ENCODE measurements at regions of chr17 and their contacts with region 1.

Region 1: GRCh38 chr17:76264755-76265596 is at the start of gene UBALD2:
- DNase-seq: peak; percentile 99
- H3K4me3 Mint-ChIP-seq: peak within 1 kb of the TSS; percentile 93
- H3K27ac Mint-ChIP-seq: peak within 1 kb of the TSS; percentile 99
- H3K4me1 Mint-ChIP-seq: peaks cover 60% of the 10 kb centered on the region
- H3K27me3 Mint-ChIP-seq: no peaks in the 10 kb centered on the region
- total RNA-seq, gene UBALD2: 319 to 399 TPM

Region 2: GRCh38 chr17:75927286-75927922 is 337.6 kb before region 1 on chr17:
- CTCF ChIA-PET with region 1: no interaction called
- POLR2A ChIA-PET with region 1: no interaction called
- DNase-seq: no peak
- H3K4me3 Mint-ChIP-seq: no peak overlapping the region
- H3K27ac Mint-ChIP-seq: no peak overlapping the region
- H3K4me1 Mint-ChIP-seq: no peaks in the 10 kb centered on the region
- H3K27me3 Mint-ChIP-seq: no peaks in the 10 kb centered on the region

Region 3: GRCh38 chr17:76191896-76192295 is 73.1 kb before region 1 on chr17:
- CTCF ChIA-PET with region 1: interaction called, 5 read pairs
- POLR2A ChIA-PET with region 1: interaction called, 13 read pairs
- DNase-seq: peak; percentile 81
- H3K4me3 Mint-ChIP-seq: peak overlapping the region; percentile 57
- H3K27ac Mint-ChIP-seq: peak overlapping the region; percentile 96
- H3K4me1 Mint-ChIP-seq: peaks cover 84% of the 10 kb centered on the region
- H3K27me3 Mint-ChIP-seq: no peaks in the 10 kb centered on the region

Region 4: DNA sequence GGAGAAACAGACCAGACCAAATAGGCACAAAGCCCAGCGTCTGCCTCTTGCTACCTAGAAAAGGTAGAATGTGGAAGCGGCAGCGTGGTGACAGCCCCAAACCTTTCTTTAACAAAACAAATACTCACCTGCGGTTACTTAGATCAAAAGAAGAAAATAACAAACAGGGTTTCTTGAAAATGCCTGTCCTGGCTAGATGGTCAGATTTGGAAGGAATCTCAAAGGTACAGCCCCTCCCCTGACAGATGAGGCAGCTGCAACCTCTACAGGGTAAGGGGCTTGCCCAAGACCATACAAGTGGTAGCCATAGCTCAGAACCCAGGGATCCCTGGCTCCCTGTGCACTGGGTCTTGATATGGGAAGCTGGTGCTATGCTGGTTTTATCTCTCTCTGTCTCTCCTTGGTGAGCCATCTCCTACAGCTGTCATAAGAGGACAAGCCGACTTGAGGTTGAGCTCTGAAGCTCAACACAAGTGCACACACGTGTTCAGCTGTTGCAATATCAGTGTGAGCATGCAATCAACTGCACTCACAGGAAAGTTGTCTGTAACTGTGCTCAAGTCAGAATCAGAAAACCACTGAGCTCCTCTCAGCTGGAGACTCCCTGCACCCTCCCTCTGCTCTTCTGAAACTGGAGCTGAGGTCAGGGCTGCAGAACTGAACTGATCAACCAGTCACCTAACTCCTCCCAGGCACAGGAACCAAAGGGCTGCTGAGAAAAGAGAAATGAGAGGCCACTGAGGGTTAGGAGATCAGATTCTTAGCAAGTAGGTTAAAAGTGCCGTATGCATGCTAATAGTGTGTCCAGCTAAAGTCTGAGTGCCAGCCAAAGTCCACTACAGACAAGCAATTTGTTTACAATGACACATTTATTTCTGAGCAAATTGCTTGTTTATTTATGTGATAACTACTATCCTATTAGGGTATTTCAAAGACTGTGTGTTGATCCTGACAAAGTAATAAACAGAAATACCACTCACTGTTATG is 18.6 kb before region 1 on chr17:
- CTCF ChIA-PET with region 1: interaction called, 40 read pairs
- POLR2A ChIA-PET with region 1: interaction called, 45 read pairs
- DNase-seq: peak; percentile 86
- H3K4me3 Mint-ChIP-seq: peak overlapping the region; percentile 62
- H3K27ac Mint-ChIP-seq: peak overlapping the region; percentile 92
- H3K4me1 Mint-ChIP-seq: peaks cover 86% of the 10 kb centered on the region
- H3K27me3 Mint-ChIP-seq: no peaks in the 10 kb centered on the region

Region 5: GRCh38 chr17:76252040-76252954 is 12.7 kb before region 1 on chr17:
- CTCF ChIA-PET with region 1: interaction called, 40 read pairs
- POLR2A ChIA-PET with region 1: interaction called, 6 read pairs
- DNase-seq: peak; percentile 56
- H3K4me3 Mint-ChIP-seq: peak overlapping the region; percentile 66
- H3K27ac Mint-ChIP-seq: peak overlapping the region; percentile 96
- H3K4me1 Mint-ChIP-seq: peaks cover 73% of the 10 kb centered on the region
- H3K27me3 Mint-ChIP-seq: no peaks in the 10 kb centered on the region

Region 6: GRCh38 chr17:76296186-76296585 is 31.2 kb after region 1 on chr17:
- CTCF ChIA-PET with region 1: no interaction called
- POLR2A ChIA-PET with region 1: no interaction called
- DNase-seq: no peak
- H3K4me3 Mint-ChIP-seq: no peak overlapping the region
- H3K27ac Mint-ChIP-seq: no peak overlapping the region
- H3K4me1 Mint-ChIP-seq: no peaks in the 10 kb centered on the region
- H3K27me3 Mint-ChIP-seq: no peaks in the 10 kb centered on the region

Region 7: GRCh38 chr17:76397687-76398487 is 132.9 kb after region 1 on chr17:
- CTCF ChIA-PET with region 1: no interaction called
- POLR2A ChIA-PET with region 1: no interaction called
- DNase-seq: peak; percentile 91
- H3K4me3 Mint-ChIP-seq: no peak overlapping the region
- H3K27ac Mint-ChIP-seq: no peak overlapping the region
- H3K4me1 Mint-ChIP-seq: no peaks in the 10 kb centered on the region
- H3K27me3 Mint-ChIP-seq: no peaks in the 10 kb centered on the region